ENCODE measurements at regions of chr19 and their contacts with region 1.

Region 1: DNA sequence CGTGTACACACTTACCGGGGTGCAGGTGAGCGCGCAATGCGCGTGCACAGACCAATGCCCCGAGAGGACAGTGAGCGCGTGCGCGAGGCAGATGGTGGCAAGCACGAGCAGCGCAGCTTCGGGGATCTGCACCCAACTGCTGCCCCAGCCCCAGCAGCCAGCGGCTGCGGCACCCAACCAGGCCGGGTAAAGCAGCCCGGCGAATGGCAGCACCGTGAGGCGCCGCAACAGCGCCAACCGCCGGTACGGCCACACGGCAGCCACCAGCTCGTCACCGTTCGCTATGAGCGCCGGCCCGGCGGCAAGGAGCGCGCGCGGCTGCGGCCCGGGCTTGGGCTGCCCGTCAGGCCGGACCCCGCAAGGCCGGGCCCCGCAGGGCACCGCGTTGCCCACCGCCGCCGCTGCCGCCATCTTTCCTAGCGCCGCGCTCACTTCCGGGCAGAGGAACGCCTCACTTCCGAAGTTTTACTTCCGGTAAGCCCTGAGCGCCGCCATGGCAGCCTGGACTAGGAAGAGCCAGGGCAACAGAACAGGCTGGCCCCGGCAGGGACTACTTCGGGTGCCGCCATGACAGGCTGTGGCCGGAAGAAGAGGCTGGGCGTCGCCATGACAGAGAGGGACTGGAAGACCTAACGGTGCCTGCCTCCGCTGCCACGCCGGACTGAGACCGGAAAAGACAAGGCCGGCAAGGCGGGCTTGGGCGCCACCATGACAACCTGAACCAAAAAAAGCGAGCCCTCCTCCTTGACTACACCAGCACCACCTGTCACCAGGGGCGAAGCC is at the start of gene ATP13A1:
- DNase-seq: peak; percentile 88 to 99 (median 93)
- ATAC-seq: peak; percentile 67
- H3K4me3 ChIP-seq: peak within 1 kb of the TSS; percentile 94
- H3K4me3 Mint-ChIP-seq: peak within 1 kb of the TSS; percentile 95
- H3K27ac ChIP-seq: peak within 1 kb of the TSS; percentile 96
- H3K27ac Mint-ChIP-seq: peak within 1 kb of the TSS; percentile 99
- H3K4me1 ChIP-seq: peaks cover 70% of the 10 kb centered on the region
- H3K4me1 Mint-ChIP-seq: peaks cover 47% of the 10 kb centered on the region
- H3K27me3 ChIP-seq: no peaks in the 10 kb centered on the region
- H3K27me3 Mint-ChIP-seq: no peaks in the 10 kb centered on the region
- CTCF ChIP-seq: no peak
- total RNA-seq, gene ATP13A1: 84.8 to 87.6 TPM

Region 2: DNA sequence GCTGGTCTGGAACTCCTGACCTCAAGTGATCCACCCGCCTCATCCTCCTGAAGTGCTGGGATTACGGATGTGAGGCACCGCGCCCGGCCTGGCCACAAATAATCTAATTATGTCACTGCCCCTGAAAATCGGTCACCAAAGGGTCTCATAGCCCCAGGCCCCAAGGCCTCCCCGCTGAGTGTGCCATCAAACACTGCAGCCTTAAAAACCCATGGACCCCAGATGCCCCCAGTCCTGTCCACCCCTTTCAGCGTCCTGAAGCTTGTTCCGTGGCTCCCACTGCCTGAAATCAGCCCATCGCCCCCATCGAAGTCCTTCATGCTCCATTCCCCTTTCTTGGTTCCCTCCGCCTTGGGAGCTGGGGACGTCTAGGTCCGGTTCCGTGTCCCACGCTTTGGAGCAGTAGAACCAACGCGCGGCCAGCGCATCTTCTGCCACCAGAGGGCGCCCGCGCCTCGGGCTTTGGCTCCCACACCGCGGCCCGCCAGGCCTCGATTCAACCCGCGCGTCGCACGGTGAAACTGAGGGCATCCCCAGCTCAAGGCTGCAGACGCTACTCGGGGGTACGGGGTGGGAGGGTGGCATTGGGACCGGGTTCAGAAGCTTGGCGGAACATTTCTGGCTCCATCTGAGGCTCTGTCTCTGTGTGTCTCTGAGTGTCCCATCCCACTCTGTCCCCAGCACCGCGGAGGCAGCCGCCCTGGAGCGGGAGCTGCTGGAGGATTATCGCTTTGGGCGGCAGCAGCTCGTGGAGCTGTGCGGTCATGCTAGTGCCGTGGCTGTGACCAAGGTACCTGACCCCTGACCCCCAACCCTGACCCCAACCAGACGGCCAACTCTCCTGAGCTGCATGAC is 131.3 kb before region 1 on chr19:
- CTCF ChIA-PET with region 1: interaction called, 3 read pairs
- POLR2A ChIA-PET with region 1: interaction called, 17 read pairs
- intact Hi-C with region 1: no loop called
- DNase-seq: peak; percentile 69 to 94 (median 86)
- ATAC-seq: peak; percentile 84
- H3K4me3 ChIP-seq: no peak overlapping the region
- H3K4me3 Mint-ChIP-seq: peak overlapping the region; percentile 43
- H3K27ac ChIP-seq: no peak overlapping the region
- H3K27ac Mint-ChIP-seq: peak overlapping the region; percentile 47
- H3K4me1 ChIP-seq: peaks cover 11% of the 10 kb centered on the region
- H3K4me1 Mint-ChIP-seq: peaks cover 22% of the 10 kb centered on the region
- H3K27me3 ChIP-seq: no peaks in the 10 kb centered on the region
- H3K27me3 Mint-ChIP-seq: no peaks in the 10 kb centered on the region
- CTCF ChIP-seq: peak; percentile 88

Region 3: GRCh38 chr19:19627621-19628500 is 35.6 kb before region 1 on chr19 and contains the start of gene LPAR2:
- CTCF ChIA-PET with region 1: no interaction called
- POLR2A ChIA-PET with region 1: interaction called, 15 read pairs
- intact Hi-C with region 1: loop called in 1 of 2 experiments (anchors 1 kb)
- DNase-seq: peak; percentile 65 to 91 (median 80)
- ATAC-seq: peak; percentile 83
- H3K4me3 ChIP-seq: peak within 1 kb of the TSS; percentile 84
- H3K4me3 Mint-ChIP-seq: peak within 1 kb of the TSS; percentile 99
- H3K27ac ChIP-seq: peak within 1 kb of the TSS; percentile 52 to 84
- H3K27ac Mint-ChIP-seq: peak within 1 kb of the TSS; percentile 91
- H3K4me1 ChIP-seq: peaks cover 37% of the 10 kb centered on the region
- H3K4me1 Mint-ChIP-seq: peaks cover 28% of the 10 kb centered on the region
- H3K27me3 ChIP-seq: no peaks in the 10 kb centered on the region
- H3K27me3 Mint-ChIP-seq: no peaks in the 10 kb centered on the region
- CTCF ChIP-seq: no peak
- total RNA-seq, gene LPAR2: 85.9 to 93.7 TPM

Region 4: GRCh38 chr19:19691683-19692082 is 28.2 kb after region 1 on chr19:
- CTCF ChIA-PET with region 1: no interaction called
- POLR2A ChIA-PET with region 1: interaction called, 63 read pairs
- intact Hi-C with region 1: no loop called
- DNase-seq: no peak
- ATAC-seq: no peak
- H3K4me3 ChIP-seq: no peak overlapping the region
- H3K4me3 Mint-ChIP-seq: no peak overlapping the region
- H3K27ac ChIP-seq: no peak overlapping the region
- H3K27ac Mint-ChIP-seq: no peak overlapping the region
- H3K4me1 ChIP-seq: no peaks in the 10 kb centered on the region
- H3K4me1 Mint-ChIP-seq: no peaks in the 10 kb centered on the region
- H3K27me3 ChIP-seq: no peaks in the 10 kb centered on the region
- H3K27me3 Mint-ChIP-seq: no peaks in the 10 kb centered on the region
- CTCF ChIP-seq: no peak

Region 5: DNA sequence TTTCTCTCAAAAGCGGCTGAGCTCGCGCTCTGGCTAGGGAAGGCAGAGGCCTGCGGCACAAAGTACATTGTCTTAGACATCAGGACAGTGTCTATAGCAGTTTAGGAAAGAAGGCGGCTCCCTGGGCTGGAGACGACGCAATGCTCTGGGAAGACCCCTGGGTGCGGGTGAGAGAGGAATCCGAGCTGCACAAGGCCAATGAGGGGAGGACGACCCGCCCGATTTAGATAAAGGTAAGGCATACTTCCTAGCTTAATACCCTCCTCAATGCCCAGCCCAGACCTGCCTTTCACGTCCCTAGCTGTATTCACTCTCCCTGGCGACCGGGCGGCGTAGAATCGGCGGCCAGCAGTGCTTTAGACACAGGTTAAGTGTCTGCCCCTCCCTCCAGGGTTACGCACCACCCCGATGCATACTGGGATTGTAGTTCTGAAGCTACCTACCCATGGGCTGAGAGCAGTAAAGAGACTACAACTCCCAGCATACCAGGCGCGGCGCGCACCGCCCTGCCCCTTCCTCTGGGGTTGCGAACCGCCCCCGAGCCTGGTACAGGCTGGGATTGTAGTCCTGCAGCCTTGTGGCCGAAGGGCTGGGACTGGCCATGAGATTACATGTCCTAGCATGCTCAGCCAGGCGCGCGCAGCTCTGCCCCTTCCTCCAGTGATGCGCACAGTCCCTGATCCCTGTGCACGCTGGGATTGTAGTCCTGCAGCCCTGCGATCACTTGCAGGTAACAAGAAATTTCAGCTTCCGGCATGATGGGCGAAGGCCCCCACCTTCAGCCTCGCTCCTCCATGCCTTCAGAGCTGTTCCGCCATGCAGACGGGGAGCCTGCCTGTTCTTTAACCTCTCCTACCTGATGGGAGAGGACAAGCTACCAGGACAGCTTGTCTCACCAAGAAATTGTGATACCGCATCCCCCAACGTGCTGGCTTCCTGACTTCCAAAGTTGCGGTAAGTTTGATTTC is 112.9 kb after region 1 on chr19:
- CTCF ChIA-PET with region 1: interaction called, 5 read pairs
- POLR2A ChIA-PET with region 1: interaction called, 52 read pairs
- intact Hi-C with region 1: loop called in 1 of 2 experiments (anchors 2 kb)
- DNase-seq: peak; percentile 83 to 95 (median 88)
- ATAC-seq: peak; percentile 98
- H3K4me3 ChIP-seq: peak overlapping the region; percentile 85
- H3K4me3 Mint-ChIP-seq: peak overlapping the region; percentile 94
- H3K27ac ChIP-seq: peak overlapping the region; percentile 55 to 74
- H3K27ac Mint-ChIP-seq: peak overlapping the region; percentile 89
- H3K4me1 ChIP-seq: peaks cover 26% of the 10 kb centered on the region
- H3K4me1 Mint-ChIP-seq: peaks cover 50% of the 10 kb centered on the region
- H3K27me3 ChIP-seq: no peaks in the 10 kb centered on the region
- H3K27me3 Mint-ChIP-seq: no peaks in the 10 kb centered on the region
- CTCF ChIP-seq: no peak

Region 6: DNA sequence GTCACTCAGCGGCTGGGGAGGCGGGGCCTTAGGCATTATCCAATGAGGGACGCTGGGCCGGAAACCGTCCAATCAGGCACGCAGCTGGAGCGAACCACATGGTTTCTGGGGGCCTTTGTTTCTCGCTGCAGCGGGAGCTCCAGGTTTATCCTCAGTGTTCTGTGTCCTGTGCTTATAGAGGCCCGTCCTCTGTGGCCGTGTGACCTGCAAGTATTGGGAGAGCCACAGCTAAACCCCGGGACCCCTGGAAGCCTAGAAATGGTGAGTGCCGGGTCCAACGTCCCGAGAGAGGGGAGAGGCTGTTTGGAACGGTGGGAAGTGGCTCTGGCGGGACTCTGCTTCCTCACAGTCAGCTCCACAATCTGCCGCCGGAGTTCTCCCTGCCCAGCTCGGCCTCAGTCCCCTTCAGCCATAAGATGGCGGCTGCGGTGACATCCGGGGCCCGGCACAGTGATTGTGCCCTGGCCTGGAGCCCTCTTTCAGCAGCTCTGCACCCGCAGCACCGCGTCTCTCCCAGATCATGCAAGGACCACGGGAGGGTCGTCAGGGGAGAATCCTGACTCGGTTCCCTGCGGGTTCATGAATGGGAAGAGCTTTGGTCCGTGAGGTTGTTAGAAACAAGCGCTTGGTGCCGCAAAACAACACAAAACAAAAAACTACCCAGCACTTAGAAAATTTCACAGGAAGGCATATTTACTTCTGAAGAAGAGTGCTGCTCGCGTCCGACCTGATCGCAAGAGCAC is 202.5 kb after region 1 on chr19 and contains the start of gene ZNF253:
- CTCF ChIA-PET with region 1: no interaction called
- POLR2A ChIA-PET with region 1: interaction called, 85 read pairs
- intact Hi-C with region 1: loop called (anchors 5 kb)
- DNase-seq: peak; percentile 88 to 96 (median 94)
- ATAC-seq: peak; percentile 90
- H3K4me3 ChIP-seq: peak within 1 kb of the TSS; percentile 89
- H3K4me3 Mint-ChIP-seq: peak within 1 kb of the TSS; percentile 97
- H3K27ac ChIP-seq: peak within 1 kb of the TSS; percentile 86 to 88
- H3K27ac Mint-ChIP-seq: peak within 1 kb of the TSS; percentile 97
- H3K4me1 ChIP-seq: peaks cover 13% of the 10 kb centered on the region
- H3K4me1 Mint-ChIP-seq: peaks cover 41% of the 10 kb centered on the region
- H3K27me3 ChIP-seq: no peaks in the 10 kb centered on the region
- H3K27me3 Mint-ChIP-seq: no peaks in the 10 kb centered on the region
- CTCF ChIP-seq: no peak
- total RNA-seq, gene ZNF253: 4.9 to 5.2 TPM

Region 7: GRCh38 chr19:20039203-20039723 is 375.8 kb after region 1 on chr19 and contains the start of gene ZNF682:
- CTCF ChIA-PET with region 1: no interaction called
- POLR2A ChIA-PET with region 1: interaction called, 12 read pairs
- intact Hi-C with region 1: no loop called
- DNase-seq: peak; percentile 89 to 96 (median 92)
- ATAC-seq: peak; percentile 98
- H3K4me3 ChIP-seq: peak within 1 kb of the TSS; percentile 95
- H3K4me3 Mint-ChIP-seq: peak within 1 kb of the TSS; percentile 98
- H3K27ac ChIP-seq: peak within 1 kb of the TSS; percentile 72 to 77
- H3K27ac Mint-ChIP-seq: peak within 1 kb of the TSS; percentile 96
- H3K4me1 ChIP-seq: peaks cover 11% of the 10 kb centered on the region
- H3K4me1 Mint-ChIP-seq: peaks cover 19% of the 10 kb centered on the region
- H3K27me3 ChIP-seq: peaks cover 0 to 4% of the 10 kb centered on the region in 2 experiments
- H3K27me3 Mint-ChIP-seq: peaks cover 5% of the 10 kb centered on the region
- CTCF ChIP-seq: no peak
- total RNA-seq, gene ZNF682: 12.5 to 16.0 TPM

Measured in CD4-positive, alpha-beta T cell (primary cell).